Activated naive CD4-positive, alpha-beta T cell treated with anti-CD3 and anti-CD28 coated beads for 36 hours (primary cell): ENCODE measurements at regions of chr1 and their contacts with region 1.

Region 1: DNA sequence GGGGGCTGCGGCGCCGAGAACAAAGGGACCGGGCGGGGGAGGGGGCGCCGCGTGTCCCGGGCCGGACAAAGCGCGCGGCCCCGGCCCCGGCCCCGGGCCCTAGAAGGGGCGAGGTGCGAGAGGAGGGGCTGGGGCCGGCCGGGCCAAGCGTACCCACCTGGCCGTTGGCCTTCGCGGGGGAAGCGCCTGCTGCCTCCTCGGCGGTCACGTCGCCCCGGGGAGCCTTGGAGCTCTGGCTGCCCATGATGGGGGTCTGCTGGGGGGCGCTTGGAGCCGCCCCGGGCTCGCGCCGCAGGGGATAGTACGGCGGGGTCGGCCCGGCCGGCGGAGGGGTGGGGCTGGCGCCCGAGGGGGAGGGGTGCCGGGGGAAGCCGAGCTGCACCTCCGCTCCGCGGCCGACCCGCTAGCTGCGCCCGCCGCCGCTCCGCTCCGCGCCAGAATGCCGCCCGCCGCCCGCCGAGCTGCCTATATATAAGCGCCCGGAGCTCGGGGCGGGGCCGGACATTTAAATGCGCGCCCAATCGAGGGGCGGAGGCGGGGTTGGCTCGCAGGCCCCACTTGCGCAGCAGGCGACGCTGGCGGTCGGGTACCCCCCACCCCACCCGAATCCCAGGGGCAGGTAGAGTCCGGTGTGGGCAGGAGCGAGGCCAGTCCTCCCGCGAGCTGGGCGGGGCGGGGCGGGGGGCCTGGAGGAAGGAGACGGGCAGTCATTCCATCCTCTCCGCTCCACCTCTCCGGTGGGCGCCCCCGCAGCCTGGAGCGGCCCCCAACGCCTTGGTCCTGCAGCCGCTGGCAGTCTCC is at the start of gene MARCKSL1:
- DNase-seq: peak; percentile 67
- H3K4me3 Mint-ChIP-seq: peak within 1 kb of the TSS; percentile 75
- H3K27ac Mint-ChIP-seq: peak within 1 kb of the TSS; percentile 37
- H3K4me1 Mint-ChIP-seq: peaks cover 51% of the 10 kb centered on the region
- H3K27me3 Mint-ChIP-seq: no peaks in the 10 kb centered on the region
- total RNA-seq, gene MARCKSL1: 14.4 to 15.9 TPM

Region 2: DNA sequence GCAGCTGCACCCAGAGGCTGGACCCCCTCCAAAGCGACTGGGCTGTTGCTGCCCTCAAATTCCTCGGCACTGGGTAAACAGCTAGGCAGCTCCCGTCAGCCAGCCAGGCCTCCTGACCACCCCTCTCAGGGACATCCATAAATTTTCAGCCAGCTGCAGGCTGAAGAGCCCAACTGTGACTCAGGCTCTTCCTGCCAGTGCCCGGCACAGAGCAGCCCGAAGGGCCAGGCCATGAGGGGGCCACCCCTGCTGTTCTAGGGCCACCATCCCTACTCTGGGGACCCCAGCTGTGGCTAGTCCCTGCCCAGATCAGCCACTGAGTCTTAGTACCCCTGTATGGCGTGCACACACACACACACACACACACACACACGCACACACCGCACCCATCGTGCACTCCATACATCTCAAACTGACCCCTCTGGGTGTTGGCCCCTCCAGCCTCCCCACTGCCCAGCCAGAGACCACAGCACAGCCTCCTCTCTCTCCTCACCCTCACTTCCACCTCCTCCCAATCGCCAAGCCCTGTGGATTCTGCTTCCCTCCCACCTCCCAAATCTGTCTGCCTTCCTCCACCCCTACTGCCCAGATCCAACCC is 1572.2 kb before region 1 on chr1:
- CTCF ChIA-PET with region 1: no interaction called
- intact Hi-C with region 1: loop called (anchors 5 kb)
- DNase-seq: no peak
- H3K4me3 Mint-ChIP-seq: no peak overlapping the region
- H3K27ac Mint-ChIP-seq: peak overlapping the region; percentile 82
- H3K4me1 Mint-ChIP-seq: peaks cover 72% of the 10 kb centered on the region
- H3K27me3 Mint-ChIP-seq: no peaks in the 10 kb centered on the region

Region 3: DNA sequence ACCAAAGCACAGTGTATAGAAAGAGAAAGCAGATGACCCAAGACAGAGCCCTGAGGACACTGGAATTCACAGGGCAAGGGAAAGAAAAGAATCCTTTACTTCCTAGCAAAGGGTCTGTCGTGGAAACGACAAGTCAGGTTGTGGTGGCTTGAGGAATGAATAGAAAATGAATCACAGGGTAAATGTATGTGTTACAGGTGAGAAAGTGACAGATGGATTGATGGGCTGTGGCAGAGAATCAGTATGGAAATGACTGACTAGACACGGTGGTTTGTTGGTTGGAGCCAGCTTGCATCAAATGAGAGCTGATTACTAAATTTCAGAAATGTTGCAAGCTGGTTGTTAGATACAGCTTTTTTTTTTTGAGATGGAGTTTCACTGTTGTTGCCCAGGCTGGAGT is 444.7 kb before region 1 on chr1:
- CTCF ChIA-PET with region 1: no interaction called
- intact Hi-C with region 1: no loop called
- DNase-seq: peak; percentile 81
- H3K4me3 Mint-ChIP-seq: no peak overlapping the region
- H3K27ac Mint-ChIP-seq: peak overlapping the region; percentile 90
- H3K4me1 Mint-ChIP-seq: peaks cover 38% of the 10 kb centered on the region
- H3K27me3 Mint-ChIP-seq: no peaks in the 10 kb centered on the region

Region 4: GRCh38 chr1:32291708-32292492 is 44.1 kb before region 1 on chr1 and contains the start of gene HDAC1:
- CTCF ChIA-PET with region 1: interaction called, 4 read pairs
- intact Hi-C with region 1: loop called (anchors 5 kb)
- DNase-seq: peak; percentile 97
- H3K4me3 Mint-ChIP-seq: peak within 1 kb of the TSS; percentile 100
- H3K27ac Mint-ChIP-seq: peak within 1 kb of the TSS; percentile 98
- H3K4me1 Mint-ChIP-seq: peaks cover 48% of the 10 kb centered on the region
- H3K27me3 Mint-ChIP-seq: no peaks in the 10 kb centered on the region
- total RNA-seq, gene HDAC1: 111 to 120 TPM

Region 5: DNA sequence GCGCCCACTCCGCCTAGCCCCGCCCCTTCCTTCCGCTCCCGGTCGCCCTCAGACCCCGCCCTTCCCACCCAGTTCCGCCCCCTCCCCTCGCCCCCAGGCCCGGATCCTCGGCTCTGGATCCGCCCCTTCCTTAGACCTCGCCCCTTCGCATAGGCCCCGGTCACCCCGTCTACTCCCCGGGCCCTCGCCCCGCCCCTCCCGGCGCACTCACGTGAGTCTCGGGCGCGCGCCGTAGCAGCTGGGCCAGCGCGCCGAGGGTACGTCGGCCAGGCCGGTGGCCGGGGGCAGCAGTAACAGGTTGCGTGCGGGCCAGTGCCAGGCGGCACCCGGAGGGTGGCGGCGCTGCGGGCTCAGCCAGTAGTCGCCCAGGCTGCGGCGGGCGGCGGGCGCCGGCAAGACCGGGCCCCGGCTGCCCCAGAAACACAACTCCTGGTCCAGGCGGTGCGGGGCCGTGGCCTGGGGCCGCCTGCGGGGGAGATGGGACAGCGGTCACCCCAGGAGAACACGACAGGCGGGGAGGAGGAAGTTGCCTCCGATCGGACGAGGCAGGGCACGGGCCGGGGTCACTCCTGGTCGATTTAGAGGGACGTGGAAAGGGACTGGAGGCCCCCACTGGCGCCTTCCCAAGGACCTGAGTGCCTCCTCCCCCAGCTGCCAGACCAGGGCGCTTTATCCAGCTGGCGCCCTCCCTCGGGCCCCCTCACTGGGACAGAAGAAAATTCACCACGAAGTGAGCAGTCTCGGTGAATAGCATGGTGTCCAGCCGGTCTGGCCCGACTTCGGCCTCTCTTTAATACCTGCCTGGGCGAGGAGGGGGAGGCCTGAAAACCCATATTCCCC is 15.6 kb after region 1 on chr1:
- CTCF ChIA-PET with region 1: interaction called, 5 read pairs
- intact Hi-C with region 1: loop called (anchors 1 kb)
- DNase-seq: peak; percentile 95
- H3K4me3 Mint-ChIP-seq: peak overlapping the region; percentile 83
- H3K27ac Mint-ChIP-seq: peak overlapping the region; percentile 76
- H3K4me1 Mint-ChIP-seq: peaks cover 31% of the 10 kb centered on the region
- H3K27me3 Mint-ChIP-seq: no peaks in the 10 kb centered on the region

Region 6: DNA sequence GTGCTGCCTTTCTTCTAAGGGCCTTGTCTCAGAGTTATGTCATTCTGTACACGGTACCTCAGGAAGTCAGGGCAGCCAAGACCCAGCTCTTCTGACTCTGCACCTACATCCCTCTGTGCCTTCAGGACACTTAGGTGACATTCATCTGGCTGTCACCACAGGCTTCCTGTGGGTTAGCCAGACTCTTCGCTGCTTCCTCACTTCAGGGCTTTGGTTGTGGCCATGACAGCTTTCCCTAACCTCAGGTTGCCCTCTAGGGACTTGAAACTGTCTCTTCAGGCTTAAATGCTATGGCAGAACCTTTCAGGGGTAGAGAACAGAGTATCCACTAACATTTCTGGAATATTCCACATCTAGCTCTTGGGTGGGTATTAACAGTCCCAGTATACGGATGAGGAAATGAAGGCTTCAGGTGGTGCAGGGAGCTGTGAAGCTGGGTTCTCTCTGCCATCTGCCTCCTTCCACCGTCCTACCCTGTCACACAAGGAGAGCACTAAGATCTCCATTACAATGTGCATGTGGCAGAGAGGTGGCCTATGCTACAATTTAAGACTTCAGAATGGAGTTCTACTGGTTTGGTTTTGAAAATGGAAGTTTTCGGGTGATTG is 36.3 kb after region 1 on chr1:
- CTCF ChIA-PET with region 1: interaction called, 3 read pairs
- intact Hi-C with region 1: loop called (anchors 2 kb)
- DNase-seq: peak; percentile 55
- H3K4me3 Mint-ChIP-seq: no peak overlapping the region
- H3K27ac Mint-ChIP-seq: peak overlapping the region; percentile 21
- H3K4me1 Mint-ChIP-seq: peaks cover 16% of the 10 kb centered on the region
- H3K27me3 Mint-ChIP-seq: no peaks in the 10 kb centered on the region

Region 7: GRCh38 chr1:32394141-32394889 is 58.3 kb after region 1 on chr1 and contains the start of gene BSDC1:
- CTCF ChIA-PET with region 1: interaction called, 3 read pairs
- intact Hi-C with region 1: loop called (anchors 2 kb)
- DNase-seq: peak; percentile 100
- H3K4me3 Mint-ChIP-seq: peak within 1 kb of the TSS; percentile 100
- H3K27ac Mint-ChIP-seq: peak within 1 kb of the TSS; percentile 99
- H3K4me1 Mint-ChIP-seq: peaks cover 31% of the 10 kb centered on the region
- H3K27me3 Mint-ChIP-seq: no peaks in the 10 kb centered on the region
- total RNA-seq, gene BSDC1: 35.2 to 38.3 TPM

Region 8: DNA sequence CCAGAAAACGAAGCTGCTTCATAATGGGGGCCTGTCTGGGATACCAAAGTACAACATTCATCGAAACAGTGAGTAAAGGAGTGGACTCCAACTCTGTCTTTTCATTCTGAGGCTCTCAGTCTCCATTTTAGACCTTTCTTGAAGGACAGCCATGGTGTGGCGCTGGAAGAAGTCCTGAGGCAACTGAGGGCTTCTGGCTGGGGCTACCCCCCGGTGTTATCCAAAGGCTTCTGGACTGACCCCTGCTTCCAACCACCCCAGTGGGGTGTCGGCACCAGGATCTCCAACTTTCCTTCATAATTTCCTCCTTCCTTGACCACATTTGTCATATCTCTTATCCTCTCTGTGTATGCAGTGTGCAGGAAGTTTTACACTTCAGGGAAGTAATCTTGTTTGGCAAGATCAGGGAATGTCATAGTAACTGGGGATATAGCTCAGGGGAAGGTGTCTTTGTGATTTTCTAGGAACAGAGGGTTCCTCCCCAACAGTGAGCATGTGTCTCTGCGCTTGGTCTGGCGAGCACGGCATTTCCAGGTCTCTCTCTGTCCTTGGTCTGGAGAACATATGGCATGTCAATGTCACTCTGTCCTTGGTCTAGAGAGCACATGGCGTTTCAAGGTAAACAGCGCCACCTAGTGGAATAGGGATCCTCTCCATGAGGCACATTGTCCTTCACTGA is 77.7 kb after region 1 on chr1:
- CTCF ChIA-PET with region 1: no interaction called
- intact Hi-C with region 1: loop called (anchors 5 kb)
- DNase-seq: peak; percentile 84
- H3K4me3 Mint-ChIP-seq: no peak overlapping the region
- H3K27ac Mint-ChIP-seq: no peak overlapping the region
- H3K4me1 Mint-ChIP-seq: peaks cover 3% of the 10 kb centered on the region
- H3K27me3 Mint-ChIP-seq: peaks cover 7% of the 10 kb centered on the region

Region 9: DNA sequence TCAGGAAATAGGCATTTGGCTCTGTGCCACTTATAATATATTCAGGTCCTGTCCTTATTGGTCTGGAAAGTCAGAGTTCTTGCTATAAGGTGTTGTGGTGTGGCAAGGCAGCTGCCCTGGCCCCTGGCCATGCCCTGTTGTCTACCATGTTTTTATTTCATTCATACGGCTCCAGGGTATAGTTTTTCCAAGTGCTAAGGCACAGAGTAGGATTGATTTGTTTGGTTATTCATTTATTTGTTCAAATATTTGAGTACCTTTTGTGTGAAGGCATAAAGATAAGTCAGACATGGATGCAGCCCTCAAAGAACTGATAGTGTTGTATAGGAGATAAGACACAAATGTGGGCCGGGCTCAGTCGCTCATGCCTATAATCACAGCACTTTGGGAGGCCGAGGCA is 139.0 kb after region 1 on chr1:
- CTCF ChIA-PET with region 1: no interaction called
- intact Hi-C with region 1: no loop called
- DNase-seq: no peak
- H3K4me3 Mint-ChIP-seq: no peak overlapping the region
- H3K27ac Mint-ChIP-seq: no peak overlapping the region
- H3K4me1 Mint-ChIP-seq: no peaks in the 10 kb centered on the region
- H3K27me3 Mint-ChIP-seq: peaks cover 5% of the 10 kb centered on the region

Region 10: GRCh38 chr1:32619701-32620485 is 283.9 kb after region 1 on chr1:
- CTCF ChIA-PET with region 1: no interaction called
- intact Hi-C with region 1: no loop called
- DNase-seq: no peak
- H3K4me3 Mint-ChIP-seq: no peak overlapping the region
- H3K27ac Mint-ChIP-seq: no peak overlapping the region
- H3K4me1 Mint-ChIP-seq: peaks cover 36% of the 10 kb centered on the region
- H3K27me3 Mint-ChIP-seq: no peaks in the 10 kb centered on the region

Region 11: GRCh38 chr1:32939655-32940371 is 603.8 kb after region 1 on chr1:
- CTCF ChIA-PET with region 1: no interaction called
- intact Hi-C with region 1: no loop called
- DNase-seq: peak; percentile 30
- H3K4me3 Mint-ChIP-seq: no peak overlapping the region
- H3K27ac Mint-ChIP-seq: no peak overlapping the region
- H3K4me1 Mint-ChIP-seq: peaks cover 27% of the 10 kb centered on the region
- H3K27me3 Mint-ChIP-seq: no peaks in the 10 kb centered on the region